ENCODE measurements at regions of chr6 and their contacts with region 1.

Region 1: DNA sequence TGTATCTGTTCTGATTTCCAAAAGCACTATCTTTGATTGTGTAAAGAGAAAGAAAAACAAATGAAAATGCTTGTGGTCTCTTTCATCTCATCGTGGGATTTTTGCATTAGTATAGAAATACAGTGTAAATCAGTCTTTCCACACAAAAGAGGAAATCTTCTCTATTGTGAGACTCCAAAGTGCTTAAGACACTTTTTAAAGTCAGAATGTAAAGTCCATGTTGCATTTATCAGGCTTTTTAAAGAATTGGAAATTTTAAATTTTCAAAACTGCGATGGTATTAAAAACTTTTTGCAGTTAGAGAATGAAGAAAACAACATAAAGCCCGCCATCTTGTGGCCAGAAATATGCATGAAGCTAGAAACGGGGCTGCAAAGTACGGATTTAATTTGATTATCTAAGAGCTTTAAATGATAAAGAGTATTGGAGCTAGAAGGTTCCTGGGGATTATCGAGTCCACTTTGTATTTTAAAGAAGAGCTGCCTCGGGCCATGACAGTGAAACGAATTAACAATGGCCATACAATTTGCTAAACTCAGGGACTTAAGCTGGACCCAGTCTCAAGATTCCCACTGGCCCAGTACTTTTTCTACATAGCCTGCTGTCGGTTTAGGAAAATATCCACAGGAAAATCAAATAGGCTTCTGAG is 339.6 kb downstream of the ARHGAP18 start:
- DNase-seq: peak; percentile 73
- H3K4me3 ChIP-seq: no peak overlapping the region
- H3K27ac ChIP-seq: no peak overlapping the region
- H3K4me1 ChIP-seq: peaks cover 6% of the 10 kb centered on the region
- H3K27me3 ChIP-seq: no peaks in the 10 kb centered on the region
- CTCF ChIP-seq: peak; percentile 88

Region 2: GRCh38 chr6:127855542-127856159 is 1514.7 kb before region 1 on chr6:
- CTCF ChIA-PET with region 1: no interaction called
- POLR2A ChIA-PET with region 1: no interaction called
- intact Hi-C with region 1: loop called (anchors 10 kb)
- DNase-seq: peak; percentile 58
- H3K4me3 ChIP-seq: no peak overlapping the region
- H3K27ac ChIP-seq: no peak overlapping the region
- H3K4me1 ChIP-seq: peaks cover 17% of the 10 kb centered on the region
- H3K27me3 ChIP-seq: no peaks in the 10 kb centered on the region
- CTCF ChIP-seq: peak; percentile 71

Region 3: DNA sequence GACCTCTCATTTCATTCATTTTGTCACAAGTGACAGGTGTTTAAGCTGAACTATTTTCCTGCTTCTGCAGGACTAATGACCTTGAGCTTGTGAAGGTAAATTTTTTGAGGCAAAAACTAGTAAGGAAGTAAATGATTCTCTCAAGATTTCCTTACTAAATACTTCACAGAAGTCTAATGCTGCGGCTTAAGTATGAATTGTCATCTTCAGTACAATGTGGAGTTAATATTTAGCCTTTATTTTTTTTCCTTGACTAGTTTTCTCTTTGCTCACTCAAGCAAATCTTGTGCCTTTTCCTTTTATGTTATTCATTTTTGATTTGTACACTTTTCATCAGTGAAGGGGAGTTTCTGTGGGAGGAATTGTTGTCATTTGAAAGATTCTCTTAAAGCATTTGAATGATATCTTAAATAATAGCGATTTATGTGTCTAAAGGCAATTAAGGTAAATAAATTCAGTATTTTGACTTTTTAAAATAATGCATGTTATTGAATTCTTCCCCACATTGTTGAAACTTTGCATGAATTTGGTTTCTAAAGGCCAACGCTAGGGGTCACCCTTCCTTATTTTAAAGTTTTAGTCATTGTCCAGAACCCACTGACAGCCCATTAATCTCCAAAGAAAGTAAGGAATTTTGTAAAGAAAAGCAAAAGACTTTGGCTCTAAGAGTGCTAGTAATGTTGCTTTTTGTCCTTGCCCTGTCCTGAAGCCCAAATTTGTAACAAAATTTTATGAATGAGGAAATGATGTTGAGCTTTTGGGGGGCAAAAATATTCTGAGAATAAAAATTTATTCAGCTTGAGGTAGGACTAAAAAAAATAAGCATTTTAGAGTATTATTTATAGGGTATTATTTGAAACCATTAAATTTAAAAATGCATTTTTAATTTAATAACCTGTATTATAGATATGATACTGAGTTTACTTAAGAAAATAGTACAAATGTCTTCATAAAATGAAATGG is 644.8 kb before region 1 on chr6:
- CTCF ChIA-PET with region 1: interaction called, 3 read pairs
- POLR2A ChIA-PET with region 1: no interaction called
- intact Hi-C with region 1: loop called (anchors 5 kb)
- DNase-seq: peak; percentile 60
- H3K4me3 ChIP-seq: no peak overlapping the region
- H3K27ac ChIP-seq: no peak overlapping the region
- H3K4me1 ChIP-seq: peaks cover 8% of the 10 kb centered on the region
- H3K27me3 ChIP-seq: no peaks in the 10 kb centered on the region
- CTCF ChIP-seq: peak; percentile 81

Region 4: DNA sequence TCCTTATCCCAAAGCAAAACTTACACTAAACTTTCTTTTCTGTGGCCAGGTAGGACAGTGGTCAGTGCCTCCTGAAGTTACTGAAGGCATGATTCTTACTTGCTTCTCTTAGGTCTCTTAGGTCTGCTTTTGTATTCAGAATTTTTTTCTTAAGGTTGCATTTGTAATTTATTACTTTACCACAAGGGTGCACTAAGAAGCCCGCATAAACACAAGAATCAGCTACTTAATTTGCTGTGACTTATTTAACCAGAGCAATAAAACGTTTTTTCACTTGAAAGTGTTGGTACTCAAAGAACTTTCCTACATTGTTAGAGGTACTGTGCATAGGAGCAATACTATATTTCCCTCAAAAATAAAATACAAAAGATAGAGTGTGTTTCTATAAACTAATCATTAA is 562.8 kb before region 1 on chr6:
- CTCF ChIA-PET with region 1: interaction called, 3 read pairs
- POLR2A ChIA-PET with region 1: no interaction called
- intact Hi-C with region 1: loop called (anchors 5 kb)
- DNase-seq: peak; percentile 75
- H3K4me3 ChIP-seq: no peak overlapping the region
- H3K27ac ChIP-seq: no peak overlapping the region
- H3K4me1 ChIP-seq: peaks cover 18% of the 10 kb centered on the region
- H3K27me3 ChIP-seq: no peaks in the 10 kb centered on the region
- CTCF ChIP-seq: peak; percentile 63

Region 5: DNA sequence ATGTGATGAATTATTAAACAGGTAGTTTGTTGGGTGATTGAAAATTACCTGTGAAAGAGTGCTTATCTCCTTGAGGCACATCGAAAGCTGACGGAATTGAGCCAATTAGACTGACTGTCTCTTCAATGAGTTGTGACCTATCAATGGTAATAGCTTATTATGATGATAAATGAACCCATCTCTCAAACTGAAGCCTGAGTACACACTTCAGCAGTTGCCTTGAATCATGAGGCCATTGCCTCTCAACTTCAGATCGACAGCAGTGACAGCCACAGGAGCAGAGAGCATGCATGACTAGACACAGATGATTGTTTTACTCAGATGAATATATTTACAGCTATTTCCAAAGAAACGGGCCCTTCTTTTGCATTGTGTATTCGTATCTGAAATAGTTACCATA is 163.6 kb before region 1 on chr6:
- CTCF ChIA-PET with region 1: no interaction called
- POLR2A ChIA-PET with region 1: no interaction called
- intact Hi-C with region 1: loop called (anchors 5 kb)
- DNase-seq: peak; percentile 86
- H3K4me3 ChIP-seq: no peak overlapping the region
- H3K27ac ChIP-seq: peak overlapping the region; percentile 74
- H3K4me1 ChIP-seq: peaks cover 61% of the 10 kb centered on the region
- H3K27me3 ChIP-seq: no peaks in the 10 kb centered on the region
- CTCF ChIP-seq: no peak

Region 6: GRCh38 chr6:129264480-129265045 is 105.8 kb before region 1 on chr6:
- CTCF ChIA-PET with region 1: no interaction called
- POLR2A ChIA-PET with region 1: no interaction called
- intact Hi-C with region 1: loop called (anchors 5 kb)
- DNase-seq: no peak
- H3K4me3 ChIP-seq: no peak overlapping the region
- H3K27ac ChIP-seq: no peak overlapping the region
- H3K4me1 ChIP-seq: peaks cover 21% of the 10 kb centered on the region
- H3K27me3 ChIP-seq: no peaks in the 10 kb centered on the region
- CTCF ChIP-seq: no peak

Region 7: DNA sequence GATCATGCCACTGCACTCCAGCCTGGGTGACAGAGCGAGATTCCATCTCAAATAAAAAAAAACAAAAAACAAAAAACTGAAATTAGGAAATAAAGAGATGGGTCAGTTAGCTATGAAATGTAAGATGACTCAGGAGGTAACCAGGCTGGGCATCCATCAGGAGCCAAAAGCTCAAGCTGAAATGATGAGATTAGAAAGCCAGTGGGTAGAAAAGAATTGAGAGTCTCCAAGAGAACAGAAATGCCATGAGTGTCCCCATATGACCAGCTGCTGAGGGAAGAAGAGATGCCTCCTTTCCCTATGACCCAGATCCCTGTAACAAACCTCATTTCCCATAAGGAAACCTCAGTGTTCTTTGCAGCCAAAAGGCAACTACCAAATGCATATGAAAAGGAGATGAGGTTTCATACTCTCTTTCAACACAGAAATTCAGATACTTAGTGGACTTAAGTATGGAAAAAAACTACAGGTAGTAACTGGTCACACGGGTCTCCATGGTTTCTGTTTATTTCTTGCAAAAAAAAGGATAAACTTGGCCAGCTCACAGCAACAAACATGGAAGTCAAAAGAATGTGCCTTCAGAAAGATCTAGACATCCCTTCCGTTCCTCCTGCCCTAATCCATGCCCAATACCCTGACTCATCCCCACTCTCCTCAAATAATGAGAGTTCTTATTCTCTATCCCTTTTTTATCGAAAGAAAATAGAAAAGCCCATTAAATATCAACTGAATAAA is 331.5 kb after region 1 on chr6:
- CTCF ChIA-PET with region 1: no interaction called
- POLR2A ChIA-PET with region 1: no interaction called
- intact Hi-C with region 1: no loop called
- DNase-seq: no peak
- H3K4me3 ChIP-seq: no peak overlapping the region
- H3K27ac ChIP-seq: no peak overlapping the region
- H3K4me1 ChIP-seq: peaks cover 2% of the 10 kb centered on the region
- H3K27me3 ChIP-seq: no peaks in the 10 kb centered on the region
- CTCF ChIP-seq: no peak

Measured in A673 (cell line).